ENCODE measurements at regions of chr5 and their contacts with region 1.

Region 1: GRCh38 chr5:134527146-134527960 is 1.9 kb downstream of the JADE2 start:
- DNase-seq: peak; percentile 76 to 84
- H3K4me3 ChIP-seq: peak overlapping the region; percentile 79 to 95 (median 92)
- H3K27ac ChIP-seq: peak overlapping the region; percentile 98 to 99
- H3K4me1 ChIP-seq: peaks cover 0 to 10% of the 10 kb centered on the region in 2 donors
- H3K27me3 ChIP-seq: no peaks in the 10 kb centered on the region
- CTCF ChIP-seq: peak; percentile 91 to 94 (median 93)
- POLR2A ChIP-seq: peak; percentile 40

Region 2: GRCh38 chr5:134073404-134073803 is 453.9 kb before region 1 on chr5:
- intact Hi-C with region 1: no loop called
- DNase-seq: no peak
- H3K4me3 ChIP-seq: no peak overlapping the region
- H3K27ac ChIP-seq: no peak overlapping the region
- H3K4me1 ChIP-seq: no peaks in the 10 kb centered on the region
- H3K27me3 ChIP-seq: no peaks in the 10 kb centered on the region
- CTCF ChIP-seq: no peak
- POLR2A ChIP-seq: no peak

Region 3: DNA sequence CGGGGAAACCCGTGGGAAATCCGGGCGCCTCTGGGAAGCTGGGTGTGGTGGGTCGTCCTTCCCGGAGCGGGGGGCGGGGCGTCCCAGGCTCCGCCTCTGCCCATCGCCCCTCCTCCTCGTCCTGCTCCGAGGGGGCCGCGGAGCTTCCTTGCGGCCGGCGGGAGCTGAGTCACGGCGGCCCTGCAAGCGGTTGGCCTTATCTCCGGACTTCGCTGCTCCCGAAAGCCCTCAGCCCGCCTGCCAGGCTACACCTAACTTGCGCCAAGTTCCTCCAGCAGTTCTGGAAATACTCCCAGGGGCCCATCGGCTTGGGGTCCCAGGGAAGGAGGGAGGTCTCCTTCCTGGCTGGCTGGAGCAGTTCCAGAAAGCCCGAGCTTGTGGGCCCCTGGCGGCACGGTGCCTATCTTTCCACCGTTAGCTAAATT is 61.5 kb before region 1 on chr5:
- intact Hi-C with region 1: loop called (anchors 10 kb)
- DNase-seq: peak; percentile 82 to 84
- H3K4me3 ChIP-seq: peak overlapping the region; percentile 50 to 67 (median 54)
- H3K27ac ChIP-seq: peak overlapping the region; percentile 91 to 95
- H3K4me1 ChIP-seq: peaks cover 0 to 5% of the 10 kb centered on the region in 2 donors
- H3K27me3 ChIP-seq: no peaks in the 10 kb centered on the region
- CTCF ChIP-seq: peak in 1 of 3 donors; percentile 9
- POLR2A ChIP-seq: peak; percentile 4

Region 4: GRCh38 chr5:134626369-134627014 is 99.1 kb after region 1 on chr5:
- intact Hi-C with region 1: no loop called
- DNase-seq: no peak
- H3K4me3 ChIP-seq: no peak overlapping the region
- H3K27ac ChIP-seq: peak overlapping the region; percentile 70 to 73
- H3K4me1 ChIP-seq: peaks cover 0 to 2% of the 10 kb centered on the region in 2 donors
- H3K27me3 ChIP-seq: no peaks in the 10 kb centered on the region
- CTCF ChIP-seq: no peak
- POLR2A ChIP-seq: no peak

Region 5: GRCh38 chr5:135085127-135085935 is 558.0 kb after region 1 on chr5:
- intact Hi-C with region 1: no loop called
- DNase-seq: no peak
- H3K4me3 ChIP-seq: no peak overlapping the region
- H3K27ac ChIP-seq: no peak overlapping the region
- H3K4me1 ChIP-seq: no peaks in the 10 kb centered on the region
- H3K27me3 ChIP-seq: peaks cover 0 to 11% of the 10 kb centered on the region in 2 donors
- CTCF ChIP-seq: no peak
- POLR2A ChIP-seq: no peak

Region 6: GRCh38 chr5:135944967-135945560 is 1417.7 kb after region 1 on chr5:
- intact Hi-C with region 1: no loop called
- DNase-seq: peak in 1 of 2 donors; percentile 40
- H3K4me3 ChIP-seq: no peak overlapping the region
- H3K27ac ChIP-seq: no peak overlapping the region
- H3K4me1 ChIP-seq: no peaks in the 10 kb centered on the region
- H3K27me3 ChIP-seq: peaks cover 0 to 9% of the 10 kb centered on the region in 2 donors
- CTCF ChIP-seq: peak; percentile 55 to 84 (median 82)
- POLR2A ChIP-seq: no peak